Heart right ventricle (tissue), 16 donors: ENCODE measurements at regions of chr6 and their contacts with region 1.

Region 1: DNA sequence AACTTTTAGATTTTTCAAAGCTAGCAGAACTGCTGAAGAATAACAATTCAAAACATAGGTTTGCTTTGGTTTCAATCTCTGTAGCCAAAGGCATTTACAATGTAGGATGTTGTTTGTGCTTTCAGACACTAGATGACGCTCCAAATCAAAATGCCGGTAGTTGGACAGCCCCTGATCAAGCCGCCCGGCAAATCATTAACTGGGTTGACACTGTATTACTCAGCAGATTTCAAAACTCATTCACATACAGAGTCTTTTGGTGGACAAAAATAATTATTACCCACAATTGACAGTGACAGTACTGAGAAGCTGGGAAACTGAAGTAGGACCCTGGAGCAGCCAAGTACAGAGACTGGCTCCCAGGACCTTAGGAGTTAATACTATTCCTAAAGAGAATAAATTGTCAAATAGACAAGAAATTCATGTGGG is 21.3 kb upstream of the HFE start:
- DNase-seq: peak in 1 of 2 donors; percentile 62
- ATAC-seq: peak; percentile 78 to 94 (median 90)
- H3K4me3 ChIP-seq: no peak overlapping the region
- H3K27ac ChIP-seq: peak overlapping the region in 1 of 10 donors; percentile 40
- H3K4me1 ChIP-seq: peaks cover 0 to 13% (median 3%) of the 10 kb centered on the region in 9 donors
- H3K27me3 ChIP-seq: peaks cover 0 to 7% (median 0%) of the 10 kb centered on the region in 7 donors
- CTCF ChIP-seq: peak; percentile 77 to 93 (median 88)

Region 2: DNA sequence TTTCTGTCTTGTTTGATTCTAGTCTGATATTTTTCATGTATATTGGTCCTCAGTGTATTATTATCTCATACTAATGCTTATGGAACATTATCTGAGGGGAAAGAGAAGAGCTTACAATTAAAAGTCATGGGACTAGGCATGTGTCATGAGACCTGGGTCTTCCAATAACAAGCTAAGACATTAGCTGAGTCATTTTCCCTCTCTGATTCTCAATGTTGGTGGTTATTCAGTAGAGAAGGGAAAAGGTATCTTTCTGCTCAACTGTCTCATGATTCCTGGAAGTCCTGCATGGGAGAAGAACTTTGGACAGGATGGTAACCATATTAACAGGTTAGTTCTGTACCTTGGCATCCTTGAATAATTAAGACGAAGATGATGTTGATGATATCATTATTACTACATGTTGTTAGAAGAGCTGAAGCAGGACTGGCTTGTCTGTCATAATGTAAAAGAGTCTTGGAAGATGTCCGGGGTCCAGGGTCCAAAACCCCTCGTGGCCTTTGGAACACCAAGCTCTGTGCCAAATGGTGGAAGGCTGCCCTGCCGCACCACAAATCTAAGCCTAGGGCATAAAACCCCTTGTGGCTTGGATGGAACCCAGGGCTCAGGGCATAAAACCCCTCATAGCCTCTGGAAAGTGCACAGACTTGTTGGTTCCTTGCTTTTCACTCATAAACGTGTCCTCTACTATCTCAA is 84.2 kb before region 1 on chr6:
- intact Hi-C with region 1: no loop called
- DNase-seq: no peak
- ATAC-seq: no peak
- H3K4me3 ChIP-seq: no peak overlapping the region
- H3K27ac ChIP-seq: no peak overlapping the region
- H3K4me1 ChIP-seq: no peaks in the 10 kb centered on the region
- H3K27me3 ChIP-seq: no peaks in the 10 kb centered on the region
- CTCF ChIP-seq: no peak

Region 3: GRCh38 chr6:26097268-26097875 is 31.4 kb after region 1 on chr6:
- intact Hi-C with region 1: loop called (anchors 1 to 2 kb)
- DNase-seq: peak in 1 of 2 donors; percentile 65
- ATAC-seq: peak in 5 of 8 donors; percentile 78 to 86 (median 83)
- H3K4me3 ChIP-seq: no peak overlapping the region
- H3K27ac ChIP-seq: no peak overlapping the region
- H3K4me1 ChIP-seq: peaks cover 0 to 19% (median 0%) of the 10 kb centered on the region in 9 donors
- H3K27me3 ChIP-seq: no peaks in the 10 kb centered on the region
- CTCF ChIP-seq: peak; percentile 69 to 90 (median 82)

Region 4: GRCh38 chr6:26103770-26104456 is 37.9 kb after region 1 on chr6:
- intact Hi-C with region 1: loop called in 1 of 10 experiments (anchors 2 kb)
- DNase-seq: peak; percentile 83 to 90
- ATAC-seq: peak; percentile 89 to 96 (median 95)
- H3K4me3 ChIP-seq: peak overlapping the region; percentile 22 to 75 (median 60)
- H3K27ac ChIP-seq: peak overlapping the region; percentile 37 to 91 (median 80)
- H3K4me1 ChIP-seq: peaks cover 0 to 20% (median 10%) of the 10 kb centered on the region in 9 donors
- H3K27me3 ChIP-seq: no peaks in the 10 kb centered on the region
- CTCF ChIP-seq: peak in 8 of 9 donors; percentile 13 to 57 (median 40)